Vagina (tissue), 2 donors: ENCODE measurements at regions of chr6 and their contacts with region 1.

Region 1: GRCh38 chr6:126516411-126516810 is 176.5 kb downstream of the CENPW start:
- DNase-seq: no peak
- H3K4me3 ChIP-seq: no peak overlapping the region
- H3K27ac ChIP-seq: no peak overlapping the region
- H3K4me1 ChIP-seq: no peaks in the 10 kb centered on the region
- H3K27me3 ChIP-seq: no peaks in the 10 kb centered on the region
- CTCF ChIP-seq: no peak
- POLR2A ChIP-seq: no peak

Region 2: GRCh38 chr6:126285871-126286365 is 230.5 kb before region 1 on chr6:
- intact Hi-C with region 1: loop called (anchors 5 kb)
- DNase-seq: no peak
- H3K4me3 ChIP-seq: no peak overlapping the region
- H3K27ac ChIP-seq: no peak overlapping the region
- H3K4me1 ChIP-seq: no peaks in the 10 kb centered on the region
- H3K27me3 ChIP-seq: no peaks in the 10 kb centered on the region
- CTCF ChIP-seq: no peak
- POLR2A ChIP-seq: no peak